Tibial artery (tissue), 4 donors: ENCODE measurements at regions of chr9 and their contacts with region 1.

Region 1: GRCh38 chr9:121213136-121213806 is 11.6 kb upstream of the RAB14 start:
- DNase-seq: peak; percentile 86 to 94
- H3K4me3 ChIP-seq: no peak overlapping the region
- H3K27ac ChIP-seq: peak overlapping the region; percentile 42 to 57
- H3K4me1 ChIP-seq: peaks cover 0 to 5% (median 2%) of the 10 kb centered on the region in 4 donors
- H3K27me3 ChIP-seq: no peaks in the 10 kb centered on the region
- CTCF ChIP-seq: peak; percentile 96 to 97

Region 2: GRCh38 chr9:121322037-121322775 is 108.9 kb after region 1 on chr9:
- intact Hi-C with region 1: loop called (anchors 5 kb)
- DNase-seq: no peak
- H3K4me3 ChIP-seq: no peak overlapping the region
- H3K27ac ChIP-seq: peak overlapping the region; percentile 92 to 95
- H3K4me1 ChIP-seq: peaks cover 0 to 99% (median 81%) of the 10 kb centered on the region in 4 donors
- H3K27me3 ChIP-seq: no peaks in the 10 kb centered on the region
- CTCF ChIP-seq: no peak

Region 3: DNA sequence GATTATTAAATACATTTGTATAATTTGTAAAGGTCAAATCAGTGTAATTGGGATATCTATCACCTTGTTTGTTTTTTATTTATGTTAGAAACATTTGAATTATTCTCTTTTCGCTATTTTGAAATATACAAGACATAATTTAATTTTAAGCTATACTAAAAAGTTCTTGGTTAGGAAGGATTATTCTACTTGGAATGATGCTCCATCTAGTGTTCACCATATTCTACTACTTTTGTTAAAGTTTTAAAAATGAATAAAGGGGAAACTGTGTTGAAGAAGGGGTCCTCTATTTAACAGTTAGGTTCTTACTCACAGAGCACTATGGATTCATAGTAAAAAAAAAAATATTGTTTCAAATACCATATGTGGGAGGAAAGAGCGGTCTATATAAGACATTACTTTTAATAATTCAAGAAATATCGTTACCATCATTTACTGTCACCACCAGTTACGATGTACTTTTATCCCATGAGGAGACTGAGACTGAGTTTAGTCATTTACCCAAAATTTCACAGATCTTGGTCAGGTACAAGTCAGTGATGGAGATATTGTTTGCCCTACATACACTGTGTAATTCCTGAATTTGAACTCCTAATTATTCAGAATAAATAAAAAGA is 163.1 kb after region 1 on chr9:
- intact Hi-C with region 1: loop called (anchors 5 kb)
- DNase-seq: no peak
- H3K4me3 ChIP-seq: no peak overlapping the region
- H3K27ac ChIP-seq: no peak overlapping the region
- H3K4me1 ChIP-seq: peaks cover 0 to 28% (median 19%) of the 10 kb centered on the region in 4 donors
- H3K27me3 ChIP-seq: no peaks in the 10 kb centered on the region
- CTCF ChIP-seq: peak; percentile 44 to 60

Region 4: GRCh38 chr9:121399883-121400607 is 186.8 kb after region 1 on chr9:
- intact Hi-C with region 1: loop called (anchors 2 kb)
- DNase-seq: no peak
- H3K4me3 ChIP-seq: no peak overlapping the region
- H3K27ac ChIP-seq: no peak overlapping the region
- H3K4me1 ChIP-seq: no peaks in the 10 kb centered on the region
- H3K27me3 ChIP-seq: no peaks in the 10 kb centered on the region
- CTCF ChIP-seq: peak; percentile 70 to 85